Right cardiac atrium (tissue), 5 donors: ENCODE measurements at regions of chr7 and their contacts with region 1.

Region 1: GRCh38 chr7:4753711-4754432 is 21.6 kb upstream of the AP5Z1 start:
- DNase-seq: peak; percentile 77 to 92 (median 90)
- ATAC-seq: peak; percentile 82 to 83
- H3K4me3 ChIP-seq: no peak overlapping the region
- H3K27ac ChIP-seq: no peak overlapping the region
- H3K4me1 ChIP-seq: no peaks in the 10 kb centered on the region
- H3K27me3 ChIP-seq: no peaks in the 10 kb centered on the region

Region 2: GRCh38 chr7:4610768-4611467 is 143.0 kb before region 1 on chr7:
- intact Hi-C with region 1: loop called in 2 of 4 experiments (anchors 10 kb)
- DNase-seq: peak in 2 of 3 donors; percentile 19 to 55
- ATAC-seq: peak; percentile 54 to 75
- H3K4me3 ChIP-seq: no peak overlapping the region
- H3K27ac ChIP-seq: no peak overlapping the region
- H3K4me1 ChIP-seq: no peaks in the 10 kb centered on the region
- H3K27me3 ChIP-seq: no peaks in the 10 kb centered on the region

Region 3: GRCh38 chr7:4641667-4642467 is 112.0 kb before region 1 on chr7:
- intact Hi-C with region 1: loop called in 1 of 4 experiments (anchors 5 kb)
- DNase-seq: peak; percentile 96 to 99 (median 99)
- ATAC-seq: peak; percentile 97 to 98
- H3K4me3 ChIP-seq: peak overlapping the region; percentile 69
- H3K27ac ChIP-seq: peak overlapping the region; percentile 70
- H3K4me1 ChIP-seq: no peaks in the 10 kb centered on the region
- H3K27me3 ChIP-seq: no peaks in the 10 kb centered on the region

Region 4: GRCh38 chr7:4689668-4690067 is 64.2 kb before region 1 on chr7:
- intact Hi-C with region 1: loop called (anchors 5 to 10 kb)
- DNase-seq: no peak
- ATAC-seq: no peak
- H3K4me3 ChIP-seq: no peak overlapping the region
- H3K27ac ChIP-seq: no peak overlapping the region
- H3K4me1 ChIP-seq: peaks cover 9% of the 10 kb centered on the region
- H3K27me3 ChIP-seq: no peaks in the 10 kb centered on the region

Region 5: DNA sequence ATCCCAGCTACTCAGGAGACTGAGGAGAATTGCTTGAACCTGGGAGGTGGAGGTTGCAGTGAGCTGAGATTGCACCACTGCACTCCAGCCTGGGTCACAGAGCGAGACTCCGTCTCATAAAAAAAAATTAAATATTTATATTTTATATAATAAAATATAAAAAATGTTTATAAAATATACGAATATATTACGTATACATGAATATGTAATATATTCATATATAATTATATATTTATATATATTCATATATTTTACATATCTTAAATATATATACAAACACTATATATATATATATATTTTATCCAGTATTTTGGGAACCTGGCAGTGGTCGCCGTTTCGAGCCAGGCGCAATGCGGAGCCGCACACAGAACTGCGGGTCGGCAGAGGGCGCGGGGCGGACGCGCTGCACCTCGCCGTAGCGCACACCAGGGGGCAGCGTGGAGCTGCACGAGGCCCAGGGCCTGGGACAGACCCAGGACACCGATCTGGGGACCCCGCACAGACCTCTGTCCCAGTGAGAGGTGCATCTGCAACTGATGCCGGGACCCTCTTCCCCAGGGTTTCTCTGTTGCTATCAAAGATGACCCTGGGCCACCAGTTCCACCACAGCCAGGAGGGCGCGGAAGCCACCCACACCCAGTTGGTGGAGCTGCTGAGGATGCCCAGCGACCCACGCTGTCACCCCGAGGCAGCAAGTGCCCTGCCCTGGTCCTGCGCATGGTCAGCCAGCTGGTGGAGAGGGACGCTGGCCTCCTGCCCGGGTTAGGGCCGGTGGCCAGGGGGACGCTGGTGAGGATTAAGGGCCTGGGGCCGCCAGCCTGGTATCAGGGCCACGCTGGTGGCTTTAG is 44.2 kb after region 1 on chr7:
- intact Hi-C with region 1: no loop called
- DNase-seq: peak; percentile 67 to 88 (median 83)
- ATAC-seq: peak; percentile 62 to 72
- H3K4me3 ChIP-seq: no peak overlapping the region
- H3K27ac ChIP-seq: no peak overlapping the region
- H3K4me1 ChIP-seq: no peaks in the 10 kb centered on the region
- H3K27me3 ChIP-seq: no peaks in the 10 kb centered on the region

Region 6: DNA sequence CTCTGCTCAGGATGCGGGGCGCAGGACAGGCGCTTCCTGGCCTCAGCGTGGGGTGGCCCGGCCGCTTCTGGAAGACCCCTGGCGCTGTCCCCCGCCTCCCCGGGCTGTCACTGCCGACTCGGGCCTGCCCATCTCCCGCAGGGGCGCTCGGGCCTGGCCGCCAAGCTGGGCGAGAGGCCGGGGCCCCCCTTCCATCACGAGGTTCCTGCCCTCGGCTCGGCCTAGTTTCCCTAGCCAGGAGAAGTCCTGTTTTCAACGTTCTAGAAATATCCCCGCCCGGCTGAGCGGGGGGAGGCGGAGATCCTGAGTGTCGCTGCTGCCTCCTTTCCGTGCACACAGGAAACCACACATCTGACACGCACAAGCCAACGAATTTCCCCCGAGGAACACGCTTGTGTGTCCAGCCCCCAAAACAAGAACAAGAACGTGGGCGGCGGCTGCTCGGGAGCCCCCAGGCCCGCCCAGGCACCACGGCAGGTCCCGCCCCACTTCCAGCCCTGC is 55.3 kb after region 1 on chr7:
- intact Hi-C with region 1: no loop called
- DNase-seq: peak in 2 of 3 donors; percentile 59 to 82
- ATAC-seq: peak; percentile 15 to 44
- H3K4me3 ChIP-seq: no peak overlapping the region
- H3K27ac ChIP-seq: no peak overlapping the region
- H3K4me1 ChIP-seq: no peaks in the 10 kb centered on the region
- H3K27me3 ChIP-seq: no peaks in the 10 kb centered on the region

Region 7: GRCh38 chr7:5526100-5526905 is 772.4 kb after region 1 on chr7:
- intact Hi-C with region 1: no loop called
- DNase-seq: peak; percentile 52 to 76 (median 73)
- ATAC-seq: peak; percentile 0 to 3
- H3K4me3 ChIP-seq: no peak overlapping the region
- H3K27ac ChIP-seq: peak overlapping the region; percentile 46
- H3K4me1 ChIP-seq: no peaks in the 10 kb centered on the region
- H3K27me3 ChIP-seq: no peaks in the 10 kb centered on the region